WTC11 (cell line): ENCODE measurements at regions of chr6 and their contacts with region 1.

Region 1: GRCh38 chr6:108835218-108835850 is 12.9 kb upstream of the ARMC2 start:
- DNase-seq: peak; percentile 89
- ATAC-seq: peak; percentile 64
- H3K4me3 Mint-ChIP-seq: no peak overlapping the region
- H3K27ac Mint-ChIP-seq: no peak overlapping the region
- H3K4me1 Mint-ChIP-seq: peaks cover 26% of the 10 kb centered on the region
- H3K27me3 Mint-ChIP-seq: 0 out of 2 replicates have a peak, but pooled peaks cover 5% of the 10 kb centered on the region
- CTCF ChIP-seq: peak; percentile 99

Region 2: GRCh38 chr6:108558372-108559096 is 276.8 kb before region 1 on chr6:
- CTCF ChIA-PET with region 1: interaction called, 11 read pairs
- POLR2A ChIA-PET with region 1: interaction called, 3 read pairs
- DNase-seq: peak; percentile 94
- ATAC-seq: peak; percentile 40
- H3K4me3 Mint-ChIP-seq: peak overlapping the region; percentile 93
- H3K27ac Mint-ChIP-seq: peak overlapping the region; percentile 93
- H3K4me1 Mint-ChIP-seq: peaks cover 19% of the 10 kb centered on the region
- H3K27me3 Mint-ChIP-seq: peaks cover 48% of the 10 kb centered on the region
- CTCF ChIP-seq: no peak

Region 3: DNA sequence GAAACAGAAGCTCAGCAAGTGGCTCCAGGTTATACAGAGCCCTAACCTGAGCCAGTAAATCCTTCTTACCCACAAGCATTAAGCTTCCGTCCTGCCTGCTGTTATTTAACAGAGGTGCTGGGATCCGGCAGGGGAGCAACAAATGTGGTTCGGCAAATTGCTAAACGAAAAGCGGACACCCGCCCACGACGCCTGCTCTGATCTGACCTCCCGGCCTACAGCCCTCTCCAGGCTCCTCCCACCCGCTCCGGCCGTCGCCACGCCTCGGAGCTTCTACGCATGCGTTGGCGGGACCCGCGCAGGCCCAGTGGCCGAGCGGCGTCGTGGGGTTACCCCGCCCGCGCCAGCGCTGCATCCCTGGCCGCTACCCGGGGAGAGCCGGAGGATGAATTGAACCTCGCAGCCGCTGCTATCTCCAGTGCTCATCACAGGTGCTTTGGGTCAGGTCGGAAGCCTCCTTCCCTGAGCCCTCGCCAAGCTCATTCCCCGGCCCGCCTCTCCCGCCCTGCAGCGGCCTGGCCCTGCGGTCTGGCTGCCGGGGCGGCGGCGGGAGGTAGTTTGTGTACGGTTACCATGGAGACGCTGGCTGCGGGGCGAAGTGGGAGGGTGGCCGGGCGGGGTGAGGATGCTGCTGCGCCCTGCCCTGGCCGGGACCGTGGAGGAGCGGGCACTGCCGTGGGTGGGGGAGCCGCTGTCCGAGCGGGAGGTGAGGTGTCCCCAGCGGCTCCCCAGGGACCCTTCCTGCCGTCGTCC is 13.0 kb after region 1 on chr6 and contains the start of gene ARMC2:
- CTCF ChIA-PET with region 1: interaction called, 21 read pairs
- POLR2A ChIA-PET with region 1: no interaction called
- DNase-seq: peak; percentile 96
- ATAC-seq: peak; percentile 97
- H3K4me3 Mint-ChIP-seq: peak within 1 kb of the TSS; percentile 76
- H3K27ac Mint-ChIP-seq: peak within 1 kb of the TSS; percentile 32; the same call in 1 of the 2 replicates
- H3K4me1 Mint-ChIP-seq: peaks cover 13% of the 10 kb centered on the region
- H3K27me3 Mint-ChIP-seq: no peaks in the 10 kb centered on the region
- CTCF ChIP-seq: no peak
- total RNA-seq, gene ARMC2: 4.6 to 5.2 TPM (median 4.7 TPM) in 3 replicates

Region 4: GRCh38 chr6:108966855-108967755 is 131.8 kb after region 1 on chr6:
- CTCF ChIA-PET with region 1: interaction called, 22 read pairs
- POLR2A ChIA-PET with region 1: no interaction called
- DNase-seq: peak; percentile 47
- ATAC-seq: peak; percentile 70
- H3K4me3 Mint-ChIP-seq: no peak overlapping the region
- H3K27ac Mint-ChIP-seq: peak overlapping the region; percentile 83
- H3K4me1 Mint-ChIP-seq: peaks cover 35% of the 10 kb centered on the region
- H3K27me3 Mint-ChIP-seq: no peaks in the 10 kb centered on the region; the same call in 1 of the 2 replicates
- CTCF ChIP-seq: no peak

Region 5: GRCh38 chr6:109095027-109095834 is 259.9 kb after region 1 on chr6 and contains the start of gene CEP57L1:
- CTCF ChIA-PET with region 1: interaction called, 10 read pairs
- POLR2A ChIA-PET with region 1: no interaction called
- DNase-seq: peak; percentile 99
- ATAC-seq: peak; percentile 65
- H3K4me3 Mint-ChIP-seq: peak within 1 kb of the TSS; percentile 91
- H3K27ac Mint-ChIP-seq: peak within 1 kb of the TSS; percentile 99
- H3K4me1 Mint-ChIP-seq: peaks cover 25% of the 10 kb centered on the region
- H3K27me3 Mint-ChIP-seq: no peaks in the 10 kb centered on the region
- CTCF ChIP-seq: no peak
- total RNA-seq, gene CEP57L1: 12.2 to 13.3 TPM (median 13.1 TPM) in 3 replicates

Region 6: GRCh38 chr6:109130065-109130464 is 294.7 kb after region 1 on chr6:
- CTCF ChIA-PET with region 1: no interaction called
- POLR2A ChIA-PET with region 1: no interaction called
- DNase-seq: no peak
- ATAC-seq: no peak
- H3K4me3 Mint-ChIP-seq: no peak overlapping the region
- H3K27ac Mint-ChIP-seq: no peak overlapping the region
- H3K4me1 Mint-ChIP-seq: no peaks in the 10 kb centered on the region
- H3K27me3 Mint-ChIP-seq: no peaks in the 10 kb centered on the region
- CTCF ChIP-seq: no peak